Activated CD4-positive, alpha-beta T cell treated with anti-CD3 and anti-CD28 coated beads for 36 hours (primary cell): ENCODE measurements at regions of chr1 and their contacts with region 1.

Region 1: GRCh38 chr1:170664828-170665612 is 1.1 kb downstream of the PRRX1 start:
- DNase-seq: no peak
- ATAC-seq: no peak
- H3K4me3 Mint-ChIP-seq: peak overlapping the region; percentile 10
- H3K27ac Mint-ChIP-seq: no peak overlapping the region
- H3K4me1 Mint-ChIP-seq: peaks cover 34% of the 10 kb centered on the region
- H3K27me3 Mint-ChIP-seq: peaks cover 73% of the 10 kb centered on the region

Region 2: GRCh38 chr1:169933984-169934725 is 730.9 kb before region 1 on chr1:
- CTCF ChIA-PET with region 1: no interaction called
- POLR2A ChIA-PET with region 1: no interaction called
- intact Hi-C with region 1: loop called in 1 of 2 experiments (anchors 5 kb)
- DNase-seq: no peak
- ATAC-seq: no peak
- H3K4me3 Mint-ChIP-seq: no peak overlapping the region
- H3K27ac Mint-ChIP-seq: no peak overlapping the region
- H3K4me1 Mint-ChIP-seq: no peaks in the 10 kb centered on the region
- H3K27me3 Mint-ChIP-seq: no peaks in the 10 kb centered on the region

Region 3: DNA sequence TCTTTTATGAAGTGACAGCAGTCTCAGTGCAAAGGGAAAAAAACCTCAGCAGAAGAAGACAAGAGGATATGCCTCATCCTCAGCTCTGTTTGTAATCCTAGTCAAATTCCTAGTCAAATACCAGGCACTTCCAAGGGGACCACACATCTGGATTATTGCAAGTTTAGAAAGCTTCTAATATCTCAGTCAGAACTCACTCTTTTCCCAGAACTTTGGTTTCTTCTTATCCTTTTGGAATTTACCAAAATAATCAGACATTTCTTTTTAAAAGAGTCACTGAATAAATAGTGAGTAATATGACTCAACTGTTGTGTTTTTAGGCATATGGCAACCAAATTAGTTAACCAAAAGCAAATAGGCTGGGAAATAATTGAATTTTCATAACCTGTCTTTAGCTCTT is 46.7 kb after region 1 on chr1:
- CTCF ChIA-PET with region 1: no interaction called
- POLR2A ChIA-PET with region 1: no interaction called
- intact Hi-C with region 1: loop called in 1 of 2 experiments (anchors 5 kb)
- DNase-seq: no peak
- ATAC-seq: no peak
- H3K4me3 Mint-ChIP-seq: no peak overlapping the region
- H3K27ac Mint-ChIP-seq: no peak overlapping the region
- H3K4me1 Mint-ChIP-seq: no peaks in the 10 kb centered on the region
- H3K27me3 Mint-ChIP-seq: peaks cover 15% of the 10 kb centered on the region